Thyroid gland (tissue), 4 donors: ENCODE measurements at regions of chr15 and their contacts with region 1.

Region 1: DNA sequence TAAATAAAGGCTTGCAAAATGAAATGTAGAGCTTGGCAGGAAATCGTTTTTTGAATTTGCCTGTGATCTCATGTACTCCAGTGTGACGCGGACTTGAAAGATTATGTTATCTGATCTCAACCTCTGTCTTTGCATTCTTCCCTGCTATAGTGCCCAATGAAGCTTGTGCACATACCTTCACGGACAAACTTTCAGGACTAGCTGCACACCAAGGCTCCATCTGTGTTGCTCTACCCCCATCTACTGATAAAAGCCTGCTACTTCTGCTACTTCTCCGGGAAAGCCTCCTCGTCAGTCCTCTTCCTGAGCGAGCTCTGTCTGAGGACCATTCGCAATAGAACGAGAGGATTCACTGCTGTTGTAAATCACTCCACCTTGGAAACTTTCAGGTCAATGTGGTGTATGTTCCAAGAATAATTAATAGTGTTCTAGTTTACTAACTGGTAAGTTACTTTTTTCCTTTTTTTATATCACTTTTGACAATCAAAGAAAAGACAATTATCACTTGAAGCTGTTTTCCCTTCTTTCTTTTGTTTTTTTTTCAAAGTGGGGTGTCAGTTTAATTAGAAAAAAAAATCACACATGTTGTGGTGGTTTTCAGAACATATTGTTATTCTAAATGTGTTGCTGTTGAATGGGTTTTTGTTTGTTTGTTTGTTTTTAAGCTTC is 217.6 kb downstream of the ARRDC4 start:
- DNase-seq: peak; percentile 27 to 32
- H3K4me3 ChIP-seq: no peak overlapping the region
- H3K27ac ChIP-seq: no peak overlapping the region
- H3K4me1 ChIP-seq: no peaks in the 10 kb centered on the region
- H3K27me3 ChIP-seq: no peaks in the 10 kb centered on the region
- CTCF ChIP-seq: peak in 5 of 6 experiments; percentile 57 to 72 (median 66)
- POLR2A ChIP-seq: no peak

Region 2: DNA sequence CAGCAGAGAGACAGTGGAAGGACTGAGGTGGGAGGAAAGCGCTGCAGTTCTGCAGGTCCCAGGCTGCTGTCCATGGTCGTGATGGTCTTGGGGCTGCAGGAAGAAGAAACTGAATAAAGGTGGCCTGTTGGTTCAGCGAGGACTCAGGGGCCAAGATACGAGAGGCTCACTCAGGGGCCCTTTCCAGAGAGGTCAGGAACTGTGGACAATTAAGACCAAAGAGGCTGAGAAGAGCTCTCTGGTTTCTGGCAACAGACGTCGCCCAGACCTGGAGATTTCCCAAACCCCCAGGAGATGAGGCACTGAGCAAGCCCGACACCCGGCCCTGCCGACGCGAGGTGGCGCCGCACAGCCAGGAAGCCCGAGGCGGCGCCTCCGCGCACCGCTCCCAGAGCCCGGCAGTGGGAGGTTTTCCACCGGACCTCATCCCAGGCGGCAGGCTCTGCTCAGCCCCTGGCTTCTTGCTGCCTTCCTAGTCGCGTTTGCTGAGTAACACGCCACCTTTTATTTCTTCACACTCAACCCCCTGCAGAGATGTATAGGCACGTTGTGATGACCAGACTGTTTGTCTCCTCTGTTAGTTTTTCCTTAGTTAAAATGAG is 274.0 kb before region 1 on chr15:
- intact Hi-C with region 1: loop called (anchors 5 kb)
- DNase-seq: peak; percentile 86 to 88
- H3K4me3 ChIP-seq: no peak overlapping the region
- H3K27ac ChIP-seq: no peak overlapping the region
- H3K4me1 ChIP-seq: peaks cover 4 to 14% of the 10 kb centered on the region in 2 donors
- H3K27me3 ChIP-seq: no peaks in the 10 kb centered on the region
- CTCF ChIP-seq: peak; percentile 49 to 81 (median 58)
- POLR2A ChIP-seq: no peak

Region 3: DNA sequence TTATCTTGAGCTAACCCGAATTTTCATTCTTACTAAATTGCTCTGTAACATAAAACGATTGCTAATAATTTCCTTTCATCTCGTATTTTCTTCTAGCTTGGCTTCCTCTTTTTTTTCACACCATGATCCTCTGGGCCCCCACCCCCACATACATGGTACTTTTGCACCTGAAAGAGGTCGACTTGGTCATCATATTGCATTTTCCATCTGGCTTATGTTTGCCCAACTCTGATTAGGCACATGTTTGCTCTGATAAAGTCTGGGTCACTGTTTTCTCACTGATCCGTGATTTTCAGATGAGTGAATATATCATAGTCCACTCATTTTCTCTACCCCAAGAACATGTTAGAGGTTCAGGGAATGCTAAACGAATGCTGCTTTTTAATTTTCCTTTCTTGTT is 168.1 kb before region 1 on chr15:
- intact Hi-C with region 1: no loop called
- DNase-seq: no peak
- H3K4me3 ChIP-seq: no peak overlapping the region
- H3K27ac ChIP-seq: no peak overlapping the region
- H3K4me1 ChIP-seq: no peaks in the 10 kb centered on the region
- H3K27me3 ChIP-seq: no peaks in the 10 kb centered on the region
- CTCF ChIP-seq: no peak
- POLR2A ChIP-seq: no peak

Region 4: DNA sequence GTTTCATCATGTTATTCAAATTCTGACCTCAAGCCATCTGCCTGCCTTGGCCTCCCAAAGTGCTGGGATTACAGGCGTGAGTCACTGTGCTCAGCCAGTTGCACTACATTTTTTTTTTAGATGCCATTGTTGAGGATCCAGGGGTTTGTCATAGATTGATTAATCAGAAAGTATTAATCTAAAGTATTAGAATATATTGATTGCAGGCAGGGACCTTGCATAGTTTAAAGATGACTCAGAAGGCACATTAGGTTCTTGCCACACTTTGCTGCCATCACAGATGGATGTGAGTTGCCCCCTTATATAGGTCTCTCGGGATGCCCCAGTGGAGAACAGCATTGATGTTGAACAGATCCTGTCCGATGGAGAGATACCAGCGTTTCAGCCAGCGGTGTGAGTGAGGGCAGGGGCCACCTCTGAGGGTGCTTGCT is 511.4 kb after region 1 on chr15:
- intact Hi-C with region 1: no loop called
- DNase-seq: no peak
- H3K4me3 ChIP-seq: no peak overlapping the region
- H3K27ac ChIP-seq: no peak overlapping the region
- H3K4me1 ChIP-seq: peaks cover 59 to 90% of the 10 kb centered on the region in 2 donors
- H3K27me3 ChIP-seq: no peaks in the 10 kb centered on the region
- CTCF ChIP-seq: no peak
- POLR2A ChIP-seq: no peak